Right cardiac atrium (tissue), 5 donors: ENCODE measurements at regions of chr7 and their contacts with region 1.

Region 1: GRCh38 chr7:140517546-140518369 is 38.5 kb upstream of the MKRN1 start:
- DNase-seq: peak; percentile 93 to 97 (median 96)
- ATAC-seq: peak; percentile 94 to 95
- H3K4me3 ChIP-seq: no peak overlapping the region
- H3K27ac ChIP-seq: no peak overlapping the region
- H3K4me1 ChIP-seq: no peaks in the 10 kb centered on the region
- H3K27me3 ChIP-seq: no peaks in the 10 kb centered on the region

Region 2: DNA sequence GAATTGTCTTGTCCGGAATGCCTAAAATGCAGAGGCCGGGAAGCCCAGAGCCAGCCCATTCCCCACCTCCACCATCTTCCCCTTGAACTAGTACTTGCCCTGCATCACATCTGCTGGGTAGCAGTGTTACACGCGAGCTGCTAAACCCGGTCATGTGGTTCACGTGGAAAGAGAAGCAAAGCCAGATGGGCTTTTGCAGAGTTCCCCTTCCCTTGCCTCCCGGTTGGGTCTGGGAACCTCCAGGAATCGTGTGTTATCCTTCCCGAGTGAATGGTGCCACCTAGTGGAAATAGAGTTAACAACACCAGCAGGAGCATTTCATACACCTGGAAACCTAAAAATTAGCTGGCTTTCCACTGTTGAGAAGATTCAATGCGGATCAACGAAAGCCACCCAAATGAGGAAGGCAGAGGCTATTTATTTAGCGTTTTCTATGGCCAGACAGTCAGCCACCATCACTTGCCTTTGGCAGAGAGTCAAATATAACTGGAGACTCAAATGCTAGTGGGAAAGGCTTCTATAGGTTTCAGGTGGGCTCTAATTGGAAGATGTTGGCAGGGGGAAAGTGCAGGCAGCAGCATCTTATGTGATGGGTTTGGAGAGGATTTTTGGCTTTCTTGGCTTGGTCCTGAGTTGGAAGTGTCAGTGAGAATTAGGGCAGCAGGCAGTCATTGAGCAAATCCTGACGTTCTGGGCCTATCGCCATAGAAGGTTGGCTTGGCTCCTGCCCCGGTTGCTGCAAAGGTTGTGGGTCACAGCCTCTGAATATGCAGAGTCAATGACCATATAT is 135.8 kb after region 1 on chr7:
- intact Hi-C with region 1: loop called (anchors 1 to 2 kb)
- DNase-seq: peak in 2 of 3 donors; percentile 48 to 65
- ATAC-seq: peak; percentile 69 to 74
- H3K4me3 ChIP-seq: no peak overlapping the region
- H3K27ac ChIP-seq: no peak overlapping the region
- H3K4me1 ChIP-seq: peaks cover 6% of the 10 kb centered on the region
- H3K27me3 ChIP-seq: no peaks in the 10 kb centered on the region